ENCODE measurements at regions of chr15 and their contacts with region 1.

Region 1: DNA sequence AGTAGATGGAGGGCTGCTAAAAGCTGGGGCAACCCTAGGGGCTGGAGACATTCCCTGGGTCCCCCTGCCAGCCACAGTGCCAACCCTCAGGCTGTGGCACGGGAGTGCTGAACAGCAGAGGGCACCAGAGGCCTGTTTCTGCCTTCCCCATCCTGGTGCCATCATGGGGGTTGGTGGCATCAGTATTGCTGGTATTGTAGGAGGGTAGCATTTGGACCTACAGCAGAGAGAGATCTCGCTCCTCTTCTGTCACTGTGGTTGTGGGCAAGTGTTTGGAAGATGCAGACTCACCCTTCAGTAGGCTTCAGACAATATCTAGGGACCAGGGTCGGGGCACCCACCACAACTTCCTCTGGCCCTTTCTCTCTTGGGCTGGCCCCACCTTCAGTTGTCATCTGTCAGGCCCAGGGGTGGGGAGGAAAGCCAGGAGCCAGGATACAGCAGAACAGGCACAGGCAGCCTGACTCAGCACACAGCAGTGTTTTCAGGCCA is 123.5 kb downstream of the RPLP1 start:
- DNase-seq: peak; percentile 19
- H3K4me3 ChIP-seq: no peak overlapping the region
- H3K27ac ChIP-seq: no peak overlapping the region
- H3K4me1 ChIP-seq: no peaks in the 10 kb centered on the region
- H3K27me3 ChIP-seq: no peaks in the 10 kb centered on the region
- CTCF ChIP-seq: peak; percentile 64 to 92

Region 2: GRCh38 chr15:69523010-69524001 is 52.8 kb before region 1 on chr15:
- CTCF ChIA-PET with region 1: interaction called, 23 read pairs
- dilution Hi-C with region 1: no loop called
- in situ Hi-C with region 1: no loop called
- intact Hi-C with region 1: no loop called
- DNase-seq: peak; percentile 50
- H3K4me3 ChIP-seq: no peak overlapping the region
- H3K27ac ChIP-seq: no peak overlapping the region
- H3K4me1 ChIP-seq: no peaks in the 10 kb centered on the region
- H3K27me3 ChIP-seq: no peaks in the 10 kb centered on the region
- CTCF ChIP-seq: peak; percentile 79 to 80

Region 3: DNA sequence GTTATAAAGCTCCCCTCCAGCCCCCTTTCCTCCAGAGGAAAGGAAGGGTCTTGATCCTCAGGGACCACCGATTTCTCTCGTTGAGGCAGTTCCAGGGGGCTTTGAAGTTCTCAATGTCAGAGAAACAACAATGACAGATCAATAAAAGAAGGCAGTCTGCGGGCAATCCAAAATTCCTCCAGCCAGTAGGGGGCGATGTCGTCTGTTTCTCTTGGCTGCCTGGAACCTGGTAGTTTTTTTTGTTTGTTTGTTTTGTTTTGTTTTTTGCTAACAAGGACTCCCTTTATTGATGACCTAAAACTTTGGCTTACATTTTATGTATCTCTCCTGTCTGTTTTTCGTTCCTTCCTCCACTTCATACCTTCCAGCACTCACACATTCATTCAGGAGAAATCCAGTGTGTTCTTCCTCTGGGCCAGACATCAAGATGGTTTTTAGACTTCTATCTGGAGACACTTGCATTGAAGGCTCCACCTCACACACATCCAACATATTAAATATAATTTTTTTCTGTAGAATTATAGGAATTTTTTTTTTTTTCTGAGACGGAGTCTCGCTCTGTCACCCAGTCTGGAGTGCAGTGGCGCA is 153.2 kb after region 1 on chr15:
- CTCF ChIA-PET with region 1: no interaction called
- dilution Hi-C with region 1: no loop called
- in situ Hi-C with region 1: no loop called
- intact Hi-C with region 1: loop called (anchors 1 kb)
- DNase-seq: no peak
- H3K4me3 ChIP-seq: no peak overlapping the region
- H3K27ac ChIP-seq: no peak overlapping the region
- H3K4me1 ChIP-seq: no peaks in the 10 kb centered on the region
- H3K27me3 ChIP-seq: peaks cover 2% of the 10 kb centered on the region
- CTCF ChIP-seq: peak; percentile 73

Region 4: GRCh38 chr15:70512772-70513362 is 936.8 kb after region 1 on chr15:
- CTCF ChIA-PET with region 1: no interaction called
- dilution Hi-C with region 1: no loop called
- in situ Hi-C with region 1: no loop called
- intact Hi-C with region 1: loop called (anchors 1 kb)
- DNase-seq: peak; percentile 59
- H3K4me3 ChIP-seq: no peak overlapping the region
- H3K27ac ChIP-seq: no peak overlapping the region
- H3K4me1 ChIP-seq: peaks cover 18% of the 10 kb centered on the region
- H3K27me3 ChIP-seq: peaks cover 9% of the 10 kb centered on the region
- CTCF ChIP-seq: peak; percentile 94 to 96

Measured in mammary epithelial cell (primary cell).